Ovary (tissue), 10 donors: ENCODE measurements at regions of chr6 and their contacts with region 1.

Region 1: DNA sequence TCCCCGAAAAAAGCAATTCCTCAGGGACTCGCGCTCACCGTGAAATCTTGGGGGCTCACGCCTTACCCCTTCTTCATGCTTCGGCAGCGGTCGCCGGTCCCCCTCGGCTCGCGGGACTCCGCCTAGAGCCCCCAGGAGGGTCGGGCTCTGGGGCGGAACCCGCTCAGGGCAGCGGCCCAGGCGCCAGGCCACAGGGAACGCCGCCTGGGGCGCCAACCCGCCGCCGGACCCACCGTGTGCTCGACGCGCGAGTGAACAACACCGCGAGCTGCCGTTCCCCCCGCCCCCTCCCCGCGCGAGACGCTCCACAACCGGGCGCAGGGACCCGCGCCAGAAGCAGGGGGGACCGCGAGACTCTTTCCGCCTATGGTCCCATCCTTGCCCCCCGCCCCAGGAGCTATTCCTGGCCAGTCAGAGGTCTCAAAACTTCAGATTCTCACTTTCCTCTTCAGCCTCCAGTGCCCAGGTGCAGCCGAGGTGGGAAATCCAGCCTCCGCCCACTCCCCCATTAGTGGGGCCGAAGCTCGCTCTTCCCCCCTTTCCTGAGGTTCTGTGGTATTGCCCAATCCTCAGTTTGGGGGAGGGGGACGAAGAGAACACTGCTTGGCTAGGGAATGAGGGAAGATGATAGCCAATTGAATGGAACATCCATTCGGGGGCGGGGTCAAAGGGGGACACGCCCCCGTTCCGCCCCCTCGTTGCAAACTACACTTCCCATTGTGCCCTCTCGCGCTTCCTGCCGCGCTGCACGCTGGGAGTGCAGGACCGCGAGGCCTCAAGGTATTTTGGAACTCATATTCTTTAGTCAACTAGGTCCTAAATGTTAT is at the start of gene WASF1:
- DNase-seq: peak; percentile 93 to 98 (median 97)
- H3K4me3 ChIP-seq: peak within 1 kb of the TSS; percentile 75
- H3K27ac ChIP-seq: peak within 1 kb of the TSS; percentile 86 to 88
- H3K4me1 ChIP-seq: peaks cover 10% of the 10 kb centered on the region
- H3K27me3 ChIP-seq: no peaks in the 10 kb centered on the region
- CTCF ChIP-seq: peak in 1 of 3 donors; percentile 19
- EP300 ChIP-seq: no peak
- POLR2A ChIP-seq: peak; percentile 49
- total RNA-seq, gene WASF1: 16.1 to 37.2 (median 22.0) TPM

Region 2: GRCh38 chr6:110083875-110084585 is 95.6 kb before region 1 on chr6:
- intact Hi-C with region 1: no loop called
- DNase-seq: no peak
- H3K4me3 ChIP-seq: no peak overlapping the region
- H3K27ac ChIP-seq: no peak overlapping the region
- H3K4me1 ChIP-seq: peaks cover 6% of the 10 kb centered on the region
- H3K27me3 ChIP-seq: no peaks in the 10 kb centered on the region
- CTCF ChIP-seq: no peak
- EP300 ChIP-seq: no peak
- POLR2A ChIP-seq: no peak

Region 3: DNA sequence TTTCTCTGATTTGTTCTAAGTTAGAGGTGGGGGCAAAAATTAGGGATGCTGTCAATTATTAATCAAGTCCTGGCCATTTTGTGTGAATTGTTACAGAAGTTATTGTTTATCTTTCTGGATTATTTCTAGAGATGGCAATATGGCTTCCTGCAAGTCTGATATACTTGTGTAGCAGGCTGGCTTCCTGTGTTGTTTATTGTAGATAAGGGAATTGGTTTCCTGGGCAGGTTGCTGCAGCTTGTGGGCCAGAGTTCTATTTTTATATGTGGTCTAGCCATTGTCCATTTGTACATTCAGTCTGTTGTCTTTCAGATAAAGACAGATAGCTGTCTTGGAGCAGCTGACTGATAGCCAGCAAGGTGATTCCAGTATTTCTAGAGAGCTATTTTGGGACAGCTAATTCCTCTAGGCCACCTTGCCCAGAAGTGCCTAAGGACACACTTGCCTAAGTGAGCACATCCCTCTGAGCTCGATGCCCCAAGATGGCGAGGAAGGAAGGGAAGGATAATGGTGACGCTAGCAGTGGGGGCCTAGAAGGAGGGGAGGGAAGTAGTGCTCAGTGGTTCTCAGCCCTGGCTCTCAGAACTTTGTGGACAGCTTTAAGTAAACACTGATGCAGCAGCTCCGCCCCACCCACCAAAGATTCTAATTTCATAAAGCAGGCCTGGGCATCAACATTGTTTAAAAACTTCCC is 210.2 kb after region 1 on chr6:
- intact Hi-C with region 1: loop called (anchors 2 to 10 kb)
- DNase-seq: no peak
- H3K4me3 ChIP-seq: no peak overlapping the region
- H3K27ac ChIP-seq: no peak overlapping the region
- H3K4me1 ChIP-seq: peaks cover 3% of the 10 kb centered on the region
- H3K27me3 ChIP-seq: no peaks in the 10 kb centered on the region
- CTCF ChIP-seq: no peak
- EP300 ChIP-seq: no peak
- POLR2A ChIP-seq: no peak

Region 4: DNA sequence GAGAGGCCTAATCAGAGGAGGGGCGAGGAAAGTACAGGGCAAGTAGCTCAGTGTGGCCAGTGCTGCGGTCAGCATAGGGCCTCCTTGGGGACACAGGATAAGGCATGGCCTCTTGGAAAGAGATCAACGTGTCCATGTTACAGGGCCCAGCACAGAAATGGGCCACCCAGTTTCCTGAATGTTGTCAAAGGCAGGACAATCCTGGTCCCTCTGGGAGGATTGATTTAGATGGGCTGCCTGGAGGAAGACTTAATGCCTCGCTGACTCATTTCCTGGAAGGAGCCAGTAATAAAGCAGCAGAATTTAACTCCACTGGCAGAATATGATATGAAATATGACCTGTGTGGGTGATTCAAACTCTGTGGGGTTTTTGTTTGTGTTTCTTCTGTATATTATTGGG is 219.2 kb after region 1 on chr6:
- intact Hi-C with region 1: loop called in 3 of 4 experiments (anchors 5 to 10 kb)
- DNase-seq: no peak
- H3K4me3 ChIP-seq: no peak overlapping the region
- H3K27ac ChIP-seq: peak overlapping the region in 1 of 2 donors; percentile 43
- H3K4me1 ChIP-seq: peaks cover 11% of the 10 kb centered on the region
- H3K27me3 ChIP-seq: no peaks in the 10 kb centered on the region
- CTCF ChIP-seq: no peak
- EP300 ChIP-seq: no peak
- POLR2A ChIP-seq: no peak